Sigmoid colon (tissue), 7 donors: ENCODE measurements at regions of chr14 and their contacts with region 1.

Region 1: GRCh38 chr14:50860478-50861086 is 11.3 kb upstream of the ABHD12B start:
- DNase-seq: peak; percentile 87
- H3K4me3 ChIP-seq: peak overlapping the region; percentile 38 to 61 (median 48)
- H3K27ac ChIP-seq: peak overlapping the region; percentile 57 to 76 (median 68)
- H3K4me1 ChIP-seq: peaks cover 0 to 14% (median 6%) of the 10 kb centered on the region in 4 donors
- H3K27me3 ChIP-seq: no peaks in the 10 kb centered on the region
- CTCF ChIP-seq: peak in 3 of 4 experiments; percentile 6 to 83 (median 27)
- EP300 ChIP-seq: no peak
- POLR2A ChIP-seq: no peak

Region 2: GRCh38 chr14:50778721-50779483 is 81.7 kb before region 1 on chr14:
- intact Hi-C with region 1: loop called (anchors 1 kb)
- DNase-seq: no peak
- H3K4me3 ChIP-seq: no peak overlapping the region
- H3K27ac ChIP-seq: no peak overlapping the region
- H3K4me1 ChIP-seq: peaks cover 0 to 9% (median 9%) of the 10 kb centered on the region in 4 donors
- H3K27me3 ChIP-seq: no peaks in the 10 kb centered on the region
- CTCF ChIP-seq: no peak
- EP300 ChIP-seq: no peak
- POLR2A ChIP-seq: no peak

Region 3: DNA sequence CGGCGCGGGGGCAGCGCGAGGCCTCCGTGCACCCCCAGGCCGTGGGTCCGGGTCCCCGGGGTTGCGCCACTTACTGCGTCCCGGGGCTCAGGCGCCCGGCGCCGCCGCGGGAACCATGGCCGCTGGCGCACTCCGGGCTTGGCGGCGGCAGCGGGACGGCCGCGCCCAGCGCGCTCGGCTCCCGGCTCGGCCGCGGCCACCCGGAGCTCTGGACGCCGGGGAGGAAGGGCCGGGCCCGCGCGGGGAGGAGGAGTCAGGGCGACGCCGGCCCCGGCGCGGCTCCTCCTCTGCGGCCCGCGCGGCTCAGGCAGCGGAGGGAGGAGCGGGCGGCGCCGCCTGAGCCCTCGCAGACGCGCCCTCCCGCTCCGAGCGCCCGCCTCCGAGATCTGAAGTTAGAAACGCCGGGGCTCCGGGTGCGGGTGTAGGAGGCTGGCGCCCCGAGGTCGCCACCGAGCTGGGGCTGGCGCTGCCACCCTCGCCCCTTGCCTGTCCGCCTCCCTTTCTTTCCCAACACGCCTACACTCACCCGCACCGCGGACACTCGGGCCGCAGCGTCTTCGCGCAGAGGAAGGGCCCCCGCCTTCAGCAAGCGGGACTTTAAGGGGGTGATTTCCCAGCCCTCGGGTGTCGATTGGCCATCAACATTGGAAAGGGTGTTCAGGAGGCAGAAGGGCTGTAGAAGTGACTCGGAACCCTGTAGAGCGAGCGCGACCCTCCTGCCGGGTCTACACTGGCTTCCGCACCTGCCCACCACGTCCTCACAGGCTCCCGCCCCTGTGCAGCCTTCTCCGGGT is 29.5 kb before region 1 on chr14 and contains the start of gene NIN:
- intact Hi-C with region 1: loop called (anchors 2 kb)
- DNase-seq: peak; percentile 87
- H3K4me3 ChIP-seq: peak within 1 kb of the TSS; percentile 80 to 96 (median 87)
- H3K27ac ChIP-seq: peak within 1 kb of the TSS; percentile 89 to 97 (median 94)
- H3K4me1 ChIP-seq: peaks cover 0 to 26% (median 17%) of the 10 kb centered on the region in 4 donors
- H3K27me3 ChIP-seq: no peaks in the 10 kb centered on the region
- CTCF ChIP-seq: no peak
- EP300 ChIP-seq: no peak
- POLR2A ChIP-seq: no peak
- total RNA-seq, gene NIN: 20.7 to 38.2 (median 26.9) TPM